Heart right ventricle (tissue), 16 donors: ENCODE measurements at regions of chrX and their contacts with region 1.

Region 1: GRCh38 chrX:76172325-76172893 is 453 bp upstream of the PBDC1 start:
- DNase-seq: no peak
- ATAC-seq: peak; percentile 46 to 75 (median 62)
- H3K4me3 ChIP-seq: peak overlapping the region in 9 of 10 donors; percentile 43 to 77 (median 70)
- H3K27ac ChIP-seq: peak overlapping the region in 9 of 10 donors; percentile 63 to 91 (median 83)
- H3K4me1 ChIP-seq: peaks cover 0 to 22% (median 13%) of the 10 kb centered on the region in 9 donors
- H3K27me3 ChIP-seq: peaks cover 0 to 73% (median 0%) of the 10 kb centered on the region in 7 donors
- CTCF ChIP-seq: no peak

Region 2: GRCh38 chrX:75623535-75623934 is 548.9 kb before region 1 on chrX:
- intact Hi-C with region 1: no loop called
- DNase-seq: no peak
- ATAC-seq: no peak
- H3K4me3 ChIP-seq: no peak overlapping the region
- H3K27ac ChIP-seq: no peak overlapping the region
- H3K4me1 ChIP-seq: no peaks in the 10 kb centered on the region
- H3K27me3 ChIP-seq: no peaks in the 10 kb centered on the region
- CTCF ChIP-seq: peak in 7 of 9 donors; percentile 12 to 41 (median 29)

Region 3: DNA sequence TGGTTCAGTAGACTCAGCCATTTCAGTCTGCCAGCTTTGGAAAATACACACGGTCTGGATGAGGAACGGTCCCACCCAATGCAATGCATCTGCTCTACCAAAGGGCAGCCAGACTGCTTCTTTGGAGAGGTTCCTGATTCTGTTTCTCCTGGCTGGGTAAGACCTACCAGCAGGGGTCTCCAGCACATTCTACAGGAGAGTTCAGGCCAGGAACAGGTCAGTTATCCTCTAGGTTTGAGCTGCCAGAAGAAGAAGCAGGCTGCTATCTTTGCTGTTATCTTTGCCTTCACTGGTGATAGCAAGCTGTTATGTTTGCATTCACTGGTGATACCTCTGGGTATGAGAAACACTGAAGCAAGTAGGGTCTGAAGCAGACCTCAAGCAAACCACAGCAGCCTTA is 45.1 kb before region 1 on chrX:
- intact Hi-C with region 1: no loop called
- DNase-seq: no peak
- ATAC-seq: no peak
- H3K4me3 ChIP-seq: no peak overlapping the region
- H3K27ac ChIP-seq: no peak overlapping the region
- H3K4me1 ChIP-seq: no peaks in the 10 kb centered on the region
- H3K27me3 ChIP-seq: peaks cover 0 to 63% (median 0%) of the 10 kb centered on the region in 7 donors
- CTCF ChIP-seq: peak in 1 of 9 donors; percentile 19

Region 4: DNA sequence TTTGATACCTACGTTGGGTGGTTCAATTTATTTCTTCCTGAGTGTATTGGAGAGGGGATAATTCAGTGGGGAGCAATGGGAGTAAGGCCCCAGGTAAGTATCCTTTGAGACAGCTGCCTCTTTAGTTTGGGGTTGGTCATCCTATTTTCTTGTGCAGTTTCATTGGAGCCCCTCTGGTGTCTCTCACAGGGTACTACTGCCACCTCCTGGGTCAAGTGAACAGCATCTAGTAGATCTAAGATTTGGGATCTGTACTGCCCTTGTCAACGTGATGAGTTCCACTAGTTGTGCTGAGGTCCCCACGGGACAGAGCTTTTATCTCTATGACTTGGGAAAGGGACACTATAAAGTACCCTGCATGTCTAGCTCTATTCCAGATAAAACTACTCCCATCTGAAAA is 81.0 kb after region 1 on chrX:
- intact Hi-C with region 1: loop called in 2 of 10 experiments (anchors 10 kb)
- DNase-seq: peak in 1 of 2 donors; percentile 3
- ATAC-seq: peak in 2 of 8 donors; percentile 41 to 69
- H3K4me3 ChIP-seq: no peak overlapping the region
- H3K27ac ChIP-seq: no peak overlapping the region
- H3K4me1 ChIP-seq: no peaks in the 10 kb centered on the region
- H3K27me3 ChIP-seq: peaks cover 0 to 42% (median 0%) of the 10 kb centered on the region in 7 donors
- CTCF ChIP-seq: peak in 7 of 9 donors; percentile 32 to 50 (median 47)